Activated CD4-positive, alpha-beta memory T cell treated with anti-CD3 and anti-CD28 coated beads for 36 hours (primary cell): ENCODE measurements at regions of chr20 and their contacts with region 1.

Region 1: DNA sequence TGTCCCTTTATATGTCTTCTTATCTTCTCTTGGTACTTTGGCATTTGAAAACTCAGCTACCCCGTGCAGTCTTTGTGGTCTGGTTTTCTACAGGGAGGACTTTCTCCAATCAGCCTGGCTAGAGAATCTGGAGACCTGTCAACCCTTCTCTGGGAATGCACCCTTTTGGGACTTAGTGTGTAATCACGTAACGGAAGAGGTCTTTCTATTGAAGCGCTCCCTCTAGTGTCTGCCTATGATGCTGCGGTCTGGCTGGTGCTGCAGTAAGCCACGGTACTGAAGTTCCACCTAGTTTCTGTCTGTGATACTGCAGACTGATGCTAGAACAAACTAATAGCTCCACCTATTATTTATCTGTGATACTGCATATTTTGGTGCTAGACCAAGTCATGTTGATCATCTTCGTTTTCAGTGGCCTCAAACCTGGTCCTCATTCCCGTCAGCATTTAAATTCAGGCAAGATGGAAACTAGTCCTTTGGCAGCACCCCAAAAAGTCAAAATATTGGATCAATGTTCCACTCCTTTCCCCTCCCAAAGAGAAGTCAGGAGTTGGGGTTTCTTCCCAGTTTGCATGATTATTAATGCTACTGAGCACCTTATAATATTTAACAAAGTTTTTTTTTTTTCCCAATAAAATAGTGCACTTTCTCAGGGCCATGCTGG is 12.5 kb upstream of the SIRPB2 start:
- DNase-seq: peak; percentile 83
- H3K4me3 Mint-ChIP-seq: no peak overlapping the region
- H3K27ac Mint-ChIP-seq: no peak overlapping the region
- H3K4me1 Mint-ChIP-seq: peaks cover 3% of the 10 kb centered on the region
- H3K27me3 Mint-ChIP-seq: peaks cover 17% of the 10 kb centered on the region

Region 2: GRCh38 chr20:878511-879307 is 625.0 kb before region 1 on chr20:
- CTCF ChIA-PET with region 1: no interaction called
- POLR2A ChIA-PET with region 1: no interaction called
- intact Hi-C with region 1: no loop called
- DNase-seq: peak; percentile 38
- H3K4me3 Mint-ChIP-seq: no peak overlapping the region
- H3K27ac Mint-ChIP-seq: no peak overlapping the region
- H3K4me1 Mint-ChIP-seq: peaks cover 9% of the 10 kb centered on the region
- H3K27me3 Mint-ChIP-seq: no peaks in the 10 kb centered on the region

Region 3: DNA sequence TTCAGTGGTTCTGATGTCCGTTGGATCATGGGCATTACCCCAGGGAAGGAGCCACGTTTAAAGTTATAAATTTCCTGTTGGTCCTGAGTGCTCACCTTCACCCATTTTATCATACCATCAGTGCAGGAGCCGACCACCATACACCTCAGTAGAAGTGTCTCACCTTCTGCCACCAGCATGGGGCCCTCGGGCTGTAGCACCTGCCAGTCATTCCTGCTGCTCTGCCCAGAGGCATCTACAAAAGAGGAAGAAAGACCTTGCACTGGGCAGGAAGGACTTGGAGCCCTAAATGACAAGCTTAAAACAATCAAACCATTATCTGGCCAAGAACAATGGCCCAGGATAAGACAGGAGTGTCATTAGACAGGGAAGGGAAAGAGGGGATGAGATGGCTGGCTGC is 23.9 kb before region 1 on chr20:
- CTCF ChIA-PET with region 1: interaction called, 13 read pairs
- POLR2A ChIA-PET with region 1: no interaction called
- intact Hi-C with region 1: no loop called
- DNase-seq: no peak
- H3K4me3 Mint-ChIP-seq: no peak overlapping the region
- H3K27ac Mint-ChIP-seq: no peak overlapping the region
- H3K4me1 Mint-ChIP-seq: no peaks in the 10 kb centered on the region
- H3K27me3 Mint-ChIP-seq: peaks cover 22% of the 10 kb centered on the region

Region 4: GRCh38 chr20:1491860-1492642 is 11.6 kb before region 1 on chr20:
- CTCF ChIA-PET with region 1: interaction called, 18 read pairs
- POLR2A ChIA-PET with region 1: no interaction called
- intact Hi-C with region 1: no loop called
- DNase-seq: no peak
- H3K4me3 Mint-ChIP-seq: no peak overlapping the region
- H3K27ac Mint-ChIP-seq: no peak overlapping the region
- H3K4me1 Mint-ChIP-seq: no peaks in the 10 kb centered on the region
- H3K27me3 Mint-ChIP-seq: peaks cover 19% of the 10 kb centered on the region

Region 5: GRCh38 chr20:1569417-1569881 is 65.8 kb after region 1 on chr20:
- CTCF ChIA-PET with region 1: no interaction called
- POLR2A ChIA-PET with region 1: no interaction called
- intact Hi-C with region 1: no loop called
- DNase-seq: no peak
- H3K4me3 Mint-ChIP-seq: no peak overlapping the region
- H3K27ac Mint-ChIP-seq: no peak overlapping the region
- H3K4me1 Mint-ChIP-seq: no peaks in the 10 kb centered on the region
- H3K27me3 Mint-ChIP-seq: no peaks in the 10 kb centered on the region